Esophagus muscularis mucosa (tissue), 4 donors: ENCODE measurements at regions of chr4 and their contacts with region 1.

Region 1: DNA sequence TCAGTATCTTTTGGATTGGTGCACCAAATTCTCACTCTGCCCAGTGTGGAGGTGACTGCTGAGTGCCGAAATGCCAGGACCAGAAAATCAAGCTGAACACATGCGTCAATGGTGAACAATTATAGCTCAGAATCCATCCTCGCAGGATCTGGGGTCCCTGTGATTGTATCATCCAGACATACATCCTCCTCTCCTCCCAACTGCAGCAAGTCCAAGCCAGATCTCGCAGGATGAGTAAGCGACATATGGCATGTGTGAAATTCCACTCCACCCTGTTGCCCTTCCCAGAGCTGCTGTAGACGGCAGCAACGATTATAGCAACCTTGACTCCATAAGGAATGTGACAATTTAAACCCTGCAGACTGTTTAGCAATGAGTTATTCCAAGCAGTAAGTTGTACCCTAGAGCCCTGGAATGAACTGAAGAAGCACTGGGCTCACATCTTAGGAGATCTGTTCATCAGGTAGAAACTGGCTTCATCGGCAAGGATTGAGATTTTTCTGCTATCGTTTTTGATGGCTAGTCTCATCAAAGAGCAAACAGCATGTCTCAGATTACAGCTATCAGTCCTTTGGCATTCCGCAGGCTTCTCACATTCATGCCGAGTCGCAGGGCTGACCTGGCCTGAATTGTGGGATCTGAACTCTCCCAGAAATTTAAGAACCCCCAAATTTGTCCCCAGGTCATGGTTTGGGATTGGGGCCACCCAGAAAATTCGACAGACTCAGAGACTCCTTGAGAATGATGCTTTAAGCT is 35.5 kb upstream of the SORBS2 start:
- DNase-seq: peak; percentile 84
- H3K4me3 ChIP-seq: no peak overlapping the region
- H3K27ac ChIP-seq: peak overlapping the region in 1 of 4 donors; percentile 32
- H3K4me1 ChIP-seq: peaks cover 0 to 11% (median 6%) of the 10 kb centered on the region in 4 donors
- H3K27me3 ChIP-seq: no peaks in the 10 kb centered on the region
- CTCF ChIP-seq: no peak
- EP300 ChIP-seq: no peak
- POLR2A ChIP-seq: no peak

Region 2: DNA sequence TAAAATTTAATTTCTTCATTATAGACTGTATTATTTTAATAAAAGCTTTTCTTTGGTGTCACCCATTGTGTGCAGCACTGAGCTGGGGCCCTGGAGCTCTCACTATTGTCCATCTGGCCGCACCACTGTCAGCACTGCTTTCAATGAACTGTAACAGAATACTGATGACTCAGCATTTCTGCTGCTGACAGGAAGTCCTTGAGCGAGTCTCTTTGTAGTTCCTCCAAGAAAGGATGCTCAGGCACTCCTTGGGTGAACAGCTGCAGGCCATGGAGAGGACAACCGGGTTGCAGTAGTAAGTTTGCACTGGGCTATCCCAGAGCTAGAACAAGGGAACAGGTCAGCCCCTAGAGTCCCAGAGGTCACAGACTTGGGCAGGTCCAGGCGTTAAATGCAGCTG is 117.1 kb before region 1 on chr4:
- intact Hi-C with region 1: loop called (anchors 10 kb)
- DNase-seq: peak; percentile 86
- H3K4me3 ChIP-seq: no peak overlapping the region
- H3K27ac ChIP-seq: peak overlapping the region; percentile 77 to 89 (median 85)
- H3K4me1 ChIP-seq: peaks cover 58 to 93% (median 67%) of the 10 kb centered on the region in 4 donors
- H3K27me3 ChIP-seq: no peaks in the 10 kb centered on the region
- CTCF ChIP-seq: no peak
- EP300 ChIP-seq: no peak
- POLR2A ChIP-seq: no peak